ENCODE measurements at regions of chr11 and their contacts with region 1.

Region 1: GRCh38 chr11:105862736-105863367 is 159.2 kb downstream of the MSANTD4 start:
- DNase-seq: no peak
- ATAC-seq: peak; percentile 81
- H3K4me3 ChIP-seq: no peak overlapping the region
- H3K27ac ChIP-seq: no peak overlapping the region
- H3K4me1 ChIP-seq: no peaks in the 10 kb centered on the region
- H3K27me3 ChIP-seq: no peaks in the 10 kb centered on the region
- CTCF ChIP-seq: peak; percentile 42 to 74 (median 42); a peak in 4 of 6 replicates
- EP300 ChIP-seq: no peak
- POLR2A ChIP-seq: no peak
- RAD21 ChIP-seq: peak; percentile 85

Region 2: DNA sequence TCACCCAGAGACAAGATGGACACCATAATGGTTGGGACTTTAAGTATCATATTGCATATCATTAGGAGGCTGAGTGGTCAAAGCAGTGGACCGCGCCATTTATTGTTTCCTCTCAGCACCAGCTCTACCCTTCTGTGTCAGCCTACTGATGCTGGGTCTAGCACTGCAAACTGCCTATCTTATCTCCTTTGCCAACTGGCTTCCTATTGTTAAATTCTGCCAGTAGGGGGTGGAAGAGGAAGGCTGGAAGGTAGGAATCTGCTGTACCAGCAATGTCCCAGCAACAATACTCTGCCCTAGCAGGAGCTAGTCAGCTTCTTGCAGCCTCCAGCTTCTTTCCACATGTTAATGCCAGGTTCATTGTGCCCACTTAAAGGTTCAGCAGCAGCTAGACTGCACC is 1331.8 kb before region 1 on chr11:
- CTCF ChIA-PET with region 1: no interaction called
- POLR2A ChIA-PET with region 1: no interaction called
- RAD21 ChIA-PET with region 1: no interaction called
- SMC1A ChIA-PET with region 1: no interaction called
- in situ Hi-C with region 1: no loop called
- intact Hi-C with region 1: loop called (anchors 5 kb)
- DNase-seq: no peak
- ATAC-seq: peak; percentile 55
- H3K4me3 ChIP-seq: no peak overlapping the region
- H3K27ac ChIP-seq: no peak overlapping the region
- H3K4me1 ChIP-seq: no peaks in the 10 kb centered on the region
- H3K27me3 ChIP-seq: no peaks in the 10 kb centered on the region
- CTCF ChIP-seq: peak in 2 of 3 experiments; percentile 16 to 30; a peak in 2 of 6 replicates
- EP300 ChIP-seq: no peak
- POLR2A ChIP-seq: no peak
- RAD21 ChIP-seq: 0 out of 2 replicates have a peak, but pooled peaks have one; percentile 23

Region 3: DNA sequence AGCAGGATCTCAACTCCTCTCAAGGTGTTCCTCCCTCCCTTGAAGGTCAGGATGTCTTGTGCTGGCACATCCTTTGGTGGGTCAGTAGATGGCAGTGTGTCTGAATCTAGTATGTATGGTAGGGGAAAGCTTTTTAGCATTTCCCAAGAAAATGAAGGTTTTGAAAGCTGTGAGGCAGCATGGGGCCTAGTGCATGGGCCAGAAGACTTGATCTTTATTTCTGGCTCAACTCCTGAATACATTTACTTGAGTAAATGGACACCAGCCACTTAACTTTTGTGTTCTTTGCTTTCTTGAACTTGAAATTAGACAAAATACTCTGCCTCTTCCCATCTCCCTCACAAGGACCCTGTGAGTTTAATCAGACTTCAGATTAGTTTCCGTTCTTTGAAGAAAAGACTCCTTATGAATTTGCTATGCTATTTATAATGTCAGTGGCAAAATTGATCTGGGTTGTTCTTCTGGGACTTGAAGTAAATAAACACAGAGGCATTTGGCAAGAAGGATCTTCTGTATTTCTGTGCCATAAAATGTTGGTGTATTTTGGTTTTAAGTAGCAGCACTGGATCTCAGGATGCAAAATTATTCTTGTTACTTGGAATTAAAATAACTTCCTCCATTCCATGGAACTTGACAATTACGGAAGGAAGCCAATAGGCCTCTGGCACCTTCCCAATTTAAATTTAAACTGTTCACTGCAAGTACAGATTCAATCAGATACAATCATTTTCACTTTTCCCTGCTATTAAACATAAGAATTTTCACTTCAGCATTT is 1253.4 kb before region 1 on chr11:
- CTCF ChIA-PET with region 1: no interaction called
- POLR2A ChIA-PET with region 1: no interaction called
- RAD21 ChIA-PET with region 1: interaction called, 9 read pairs
- SMC1A ChIA-PET with region 1: interaction called, 7 read pairs
- in situ Hi-C with region 1: no loop called
- intact Hi-C with region 1: loop called (anchors 5 kb)
- DNase-seq: no peak
- ATAC-seq: peak; percentile 86
- H3K4me3 ChIP-seq: no peak overlapping the region
- H3K27ac ChIP-seq: no peak overlapping the region
- H3K4me1 ChIP-seq: no peaks in the 10 kb centered on the region
- H3K27me3 ChIP-seq: no peaks in the 10 kb centered on the region
- CTCF ChIP-seq: peak; percentile 57 to 74 (median 64)
- EP300 ChIP-seq: no peak
- POLR2A ChIP-seq: no peak
- RAD21 ChIP-seq: peak; percentile 73

Region 4: GRCh38 chr11:104946907-104947306 is 915.9 kb before region 1 on chr11:
- CTCF ChIA-PET with region 1: interaction called, 25 read pairs
- POLR2A ChIA-PET with region 1: no interaction called
- RAD21 ChIA-PET with region 1: interaction called, 3 read pairs
- SMC1A ChIA-PET with region 1: no interaction called
- in situ Hi-C with region 1: no loop called
- intact Hi-C with region 1: loop called (anchors 5 kb)
- DNase-seq: peak; percentile 27
- ATAC-seq: peak; percentile 97
- H3K4me3 ChIP-seq: no peak overlapping the region
- H3K27ac ChIP-seq: no peak overlapping the region
- H3K4me1 ChIP-seq: no peaks in the 10 kb centered on the region
- H3K27me3 ChIP-seq: no peaks in the 10 kb centered on the region
- CTCF ChIP-seq: peak; percentile 51 to 53 (median 53)
- EP300 ChIP-seq: no peak
- POLR2A ChIP-seq: no peak
- RAD21 ChIP-seq: peak; percentile 52

Region 5: DNA sequence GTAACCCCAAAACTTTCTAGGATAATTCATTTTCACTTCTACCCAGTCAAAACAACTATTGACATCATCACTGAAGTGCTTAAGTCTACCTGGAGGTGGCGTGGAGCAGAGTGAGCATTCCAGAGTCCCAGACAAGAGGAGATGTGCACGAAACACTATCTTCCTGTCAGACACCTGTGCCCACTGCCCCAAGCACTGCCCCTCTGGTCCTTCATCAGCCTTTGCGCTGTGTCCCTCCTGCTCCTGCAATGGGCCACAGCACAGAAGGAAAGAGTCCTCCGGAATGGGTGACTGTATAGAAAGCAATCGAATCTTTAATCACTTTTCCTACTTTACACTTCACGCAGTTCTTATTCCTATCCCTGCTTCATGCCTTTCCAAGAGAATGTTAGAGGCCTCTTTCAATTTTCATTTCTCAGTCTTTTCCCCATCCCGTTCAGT is 253.5 kb before region 1 on chr11:
- CTCF ChIA-PET with region 1: interaction called, 6 read pairs
- POLR2A ChIA-PET with region 1: no interaction called
- RAD21 ChIA-PET with region 1: interaction called, 3 read pairs
- SMC1A ChIA-PET with region 1: no interaction called
- in situ Hi-C with region 1: no loop called
- intact Hi-C with region 1: loop called (anchors 1 kb)
- DNase-seq: no peak
- ATAC-seq: peak; percentile 83
- H3K4me3 ChIP-seq: no peak overlapping the region
- H3K27ac ChIP-seq: no peak overlapping the region
- H3K4me1 ChIP-seq: no peaks in the 10 kb centered on the region
- H3K27me3 ChIP-seq: peaks cover 0 to 3% of the 10 kb centered on the region in 2 experiments; a peak in 1 of 4 replicates
- CTCF ChIP-seq: peak; percentile 28 to 33 (median 29); a peak in 4 of 6 replicates
- EP300 ChIP-seq: no peak
- POLR2A ChIP-seq: no peak
- RAD21 ChIP-seq: 0 out of 2 replicates have a peak, but pooled peaks have one; percentile 28

Region 6: GRCh38 chr11:105852403-105852802 is 10.4 kb before region 1 on chr11:
- CTCF ChIA-PET with region 1: interaction called, 17 read pairs
- POLR2A ChIA-PET with region 1: no interaction called
- RAD21 ChIA-PET with region 1: interaction called, 7 read pairs
- SMC1A ChIA-PET with region 1: interaction called, 17 read pairs
- in situ Hi-C with region 1: no loop called
- intact Hi-C with region 1: no loop called
- DNase-seq: no peak
- ATAC-seq: no peak
- H3K4me3 ChIP-seq: no peak overlapping the region
- H3K27ac ChIP-seq: no peak overlapping the region
- H3K4me1 ChIP-seq: no peaks in the 10 kb centered on the region
- H3K27me3 ChIP-seq: no peaks in the 10 kb centered on the region
- CTCF ChIP-seq: no peak
- EP300 ChIP-seq: no peak
- POLR2A ChIP-seq: no peak
- RAD21 ChIP-seq: no peak

Measured in GM12878 (cell line).